ENCODE measurements at regions of chr1 and their contacts with region 1.

Region 1: DNA sequence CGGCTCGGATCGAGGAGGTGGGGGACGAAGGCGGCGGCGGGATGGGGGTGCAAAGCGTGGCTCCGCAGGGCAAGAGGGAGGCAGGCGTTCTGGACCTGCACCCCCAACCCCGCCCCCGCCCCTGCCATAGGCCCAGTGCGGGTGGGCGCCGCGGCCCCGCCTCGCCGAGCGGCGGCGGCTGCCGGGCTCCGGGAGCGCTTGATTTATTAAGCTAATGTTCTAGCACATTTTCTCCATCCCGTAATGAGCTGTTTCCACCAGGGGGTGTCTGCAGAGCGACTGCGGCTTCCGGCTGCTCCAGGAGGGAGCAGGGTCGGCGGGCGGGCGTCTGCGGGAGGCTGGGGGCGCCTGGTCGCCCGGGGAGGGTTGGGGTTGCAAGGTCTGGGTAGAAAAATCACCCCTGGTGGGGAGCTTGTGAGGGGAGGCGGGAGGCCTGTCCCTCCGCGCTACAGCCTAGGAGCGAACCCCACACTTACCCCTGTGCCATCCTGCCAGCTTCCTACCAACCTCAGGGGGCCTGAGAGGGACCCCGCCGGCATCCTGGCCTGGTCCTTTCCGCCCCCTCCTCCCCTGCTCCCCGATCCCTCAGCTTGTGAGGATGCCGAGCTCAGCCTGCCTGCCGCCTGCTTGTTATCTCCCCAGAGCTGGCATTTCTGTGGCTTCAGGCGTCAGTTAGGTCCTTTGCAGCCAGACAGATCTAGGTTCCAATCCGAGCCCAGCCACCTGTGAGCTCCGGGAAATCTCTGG is 48.5 kb upstream of the ACOT11 start:
- DNase-seq: peak in 3 of 10 donors; percentile 27 to 54 (median 46)
- H3K4me3 ChIP-seq: peak overlapping the region; percentile 35 to 71 (median 57)
- H3K27ac ChIP-seq: peak overlapping the region in 16 of 59 donors; percentile 6 to 76 (median 56)
- H3K27me3 ChIP-seq: peaks cover 0 to 7% (median 0%) of the 10 kb centered on the region in 45 donors
- CTCF ChIP-seq: peak in 39 of 56 donors; percentile 7 to 59 (median 29)

Region 2: GRCh38 chr1:53639251-53639763 is 860.2 kb before region 1 on chr1:
- intact Hi-C with region 1: no loop called
- DNase-seq: peak in 4 of 10 donors; percentile 6 to 31 (median 28)
- H3K4me3 ChIP-seq: no peak overlapping the region
- H3K27ac ChIP-seq: no peak overlapping the region
- H3K27me3 ChIP-seq: no peaks in the 10 kb centered on the region
- CTCF ChIP-seq: no peak

Region 3: GRCh38 chr1:53860967-53861411 is 638.5 kb before region 1 on chr1:
- intact Hi-C with region 1: loop called in 1 of 2 experiments (anchors 10 kb)
- DNase-seq: peak in 3 of 10 donors; percentile 17 to 29 (median 25)
- H3K4me3 ChIP-seq: no peak overlapping the region
- H3K27ac ChIP-seq: no peak overlapping the region
- H3K27me3 ChIP-seq: no peaks in the 10 kb centered on the region
- CTCF ChIP-seq: peak; percentile 45 to 90 (median 77)

Region 4: GRCh38 chr1:54331091-54331772 is 168.3 kb before region 1 on chr1:
- intact Hi-C with region 1: no loop called
- DNase-seq: no peak
- H3K4me3 ChIP-seq: no peak overlapping the region
- H3K27ac ChIP-seq: peak overlapping the region in 58 of 59 donors; percentile 12 to 97 (median 86)
- H3K27me3 ChIP-seq: no peaks in the 10 kb centered on the region
- CTCF ChIP-seq: no peak

Measured in dorsolateral prefrontal cortex (tissue), 120 donors.